GM13976 (cell line): ENCODE measurements at regions of chr6 and their contacts with region 1.

Region 1: GRCh38 chr6:134063966-134064445 is 11.6 kb upstream of the SLC2A12 start:
- DNase-seq: peak; percentile 78
- CTCF ChIP-seq: peak; percentile 86

Region 2: DNA sequence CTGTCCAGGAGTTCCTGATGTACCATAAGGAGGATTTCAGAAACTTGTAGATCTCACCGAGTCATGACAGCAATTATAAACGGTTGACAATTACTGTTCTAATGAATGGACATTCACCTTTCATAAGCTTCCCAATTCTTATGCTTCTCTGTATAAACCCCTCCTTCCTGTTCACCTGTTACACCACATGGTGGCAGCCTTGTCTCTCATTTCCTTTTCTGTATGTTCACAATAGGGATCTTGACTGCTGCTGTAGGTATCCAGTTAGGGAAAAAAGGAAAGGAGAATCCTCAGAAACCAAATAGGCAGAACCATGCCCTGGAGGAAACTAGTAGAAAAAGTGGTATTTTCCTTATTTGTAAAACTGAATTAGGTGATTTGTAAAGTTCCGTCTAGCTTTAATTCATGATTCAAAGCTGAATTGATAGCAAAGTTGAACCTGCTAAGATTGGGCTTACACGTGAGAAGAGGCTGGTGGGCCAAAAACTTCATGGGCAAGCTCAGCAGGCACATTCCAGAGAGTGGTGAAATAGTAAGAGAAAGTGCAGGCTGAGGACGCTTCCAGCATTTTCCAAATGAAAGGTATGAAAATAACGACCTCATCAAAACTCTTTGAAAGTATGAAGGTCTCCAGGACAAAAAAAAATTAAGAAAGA is 139.9 kb before region 1 on chr6:
- in situ Hi-C with region 1: loop called (anchors 10 kb)
- DNase-seq: peak; percentile 62
- CTCF ChIP-seq: peak; percentile 78

Region 3: DNA sequence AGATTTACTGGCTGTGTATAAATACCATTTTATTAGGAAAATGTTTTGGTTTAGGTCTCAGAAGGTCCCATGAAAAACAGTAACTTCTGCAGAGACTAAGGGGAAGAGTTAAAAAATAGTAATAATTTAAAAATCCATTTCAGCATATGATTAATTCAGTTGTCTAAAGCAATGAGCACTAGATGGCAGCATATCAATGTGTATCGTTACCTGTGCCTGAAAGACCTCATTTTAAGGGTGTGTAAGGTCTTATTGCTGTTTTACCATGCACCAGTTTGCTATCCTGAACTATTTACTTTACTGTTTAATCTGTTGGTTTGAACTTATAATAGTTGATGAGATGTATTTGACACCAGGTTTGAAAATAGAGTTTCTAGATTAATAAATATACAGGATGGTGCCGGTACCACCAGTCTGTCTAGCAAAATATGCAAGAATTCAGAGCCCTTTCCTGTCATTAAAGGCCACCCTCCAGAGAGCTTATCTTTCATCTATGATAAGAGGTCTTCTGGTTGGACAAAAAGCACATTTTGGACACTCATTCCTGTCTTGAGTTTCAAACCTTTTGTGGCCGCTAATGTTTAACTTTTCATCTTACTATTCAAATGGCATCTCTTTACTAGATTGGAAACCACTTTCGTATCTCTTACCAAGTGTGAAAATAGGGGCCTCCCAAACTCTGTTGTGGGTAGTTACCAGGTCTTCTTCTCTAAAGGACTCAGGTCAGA is 1442.4 kb after region 1 on chr6:
- in situ Hi-C with region 1: no loop called
- DNase-seq: peak; percentile 27
- CTCF ChIP-seq: peak; percentile 65